Psoas muscle (tissue), 8 donors: ENCODE measurements at regions of chr21 and their contacts with region 1.

Region 1: DNA sequence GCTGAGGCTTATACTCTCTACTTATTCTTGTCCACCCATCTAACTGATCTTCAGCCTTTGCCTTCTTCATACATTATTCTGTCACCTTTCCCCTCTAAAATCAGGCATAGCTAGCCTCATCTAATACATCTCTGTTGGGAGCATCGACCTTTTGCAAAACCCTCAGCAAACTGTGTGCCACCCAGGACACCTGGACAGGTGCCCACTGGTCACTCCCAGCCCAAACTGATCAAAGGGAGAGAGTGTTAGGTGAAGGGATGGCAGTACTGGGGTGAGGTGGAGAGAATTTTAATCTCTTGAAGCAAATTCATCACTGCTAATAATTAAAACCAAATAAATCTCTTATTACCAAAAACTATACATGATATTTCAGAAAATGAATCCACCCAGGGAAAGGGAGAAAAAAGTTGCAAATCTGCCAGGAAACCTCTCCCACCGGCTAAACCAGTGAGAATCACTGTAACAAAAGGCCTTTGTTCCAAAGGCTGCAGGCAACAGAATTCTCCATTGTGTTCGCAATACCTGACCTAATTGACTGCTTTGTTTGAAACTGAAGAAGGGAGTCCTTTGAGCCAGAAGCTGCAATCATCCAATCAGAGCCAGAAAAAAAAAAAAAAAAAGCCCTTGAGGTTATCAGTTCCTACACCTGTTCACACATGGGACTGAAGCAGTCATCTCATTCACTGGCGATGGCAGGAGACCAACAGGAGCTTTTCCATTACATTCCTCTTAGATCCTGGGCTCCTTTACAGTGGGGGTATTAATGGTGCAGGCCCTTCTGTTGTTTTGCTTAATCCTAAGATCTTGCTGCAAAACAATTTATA is 172.6 kb downstream of the APP start:
- DNase-seq: no peak
- ATAC-seq: peak in 2 of 4 donors; percentile 38 to 67
- H3K4me3 ChIP-seq: no peak overlapping the region
- H3K27ac ChIP-seq: no peak overlapping the region
- H3K4me1 ChIP-seq: peaks cover 19% of the 10 kb centered on the region
- H3K27me3 ChIP-seq: no peaks in the 10 kb centered on the region
- CTCF ChIP-seq: no peak

Region 2: GRCh38 chr21:25330266-25330665 is 667.7 kb before region 1 on chr21:
- intact Hi-C with region 1: no loop called
- DNase-seq: no peak
- ATAC-seq: no peak
- H3K4me3 ChIP-seq: no peak overlapping the region
- H3K27ac ChIP-seq: no peak overlapping the region
- H3K4me1 ChIP-seq: no peaks in the 10 kb centered on the region
- H3K27me3 ChIP-seq: no peaks in the 10 kb centered on the region
- CTCF ChIP-seq: no peak

Region 3: GRCh38 chr21:25903602-25904001 is 94.4 kb before region 1 on chr21:
- intact Hi-C with region 1: loop called in 1 of 2 experiments (anchors 10 kb)
- DNase-seq: no peak
- ATAC-seq: peak in 3 of 4 donors; percentile 63 to 87 (median 70)
- H3K4me3 ChIP-seq: no peak overlapping the region
- H3K27ac ChIP-seq: no peak overlapping the region
- H3K4me1 ChIP-seq: no peaks in the 10 kb centered on the region
- H3K27me3 ChIP-seq: no peaks in the 10 kb centered on the region
- CTCF ChIP-seq: no peak